Activated B cell treated with CpG ODN at 0.5 μM for 24 hours (primary cell): ENCODE measurements at regions of chr19 and their contacts with region 1.

Region 1: DNA sequence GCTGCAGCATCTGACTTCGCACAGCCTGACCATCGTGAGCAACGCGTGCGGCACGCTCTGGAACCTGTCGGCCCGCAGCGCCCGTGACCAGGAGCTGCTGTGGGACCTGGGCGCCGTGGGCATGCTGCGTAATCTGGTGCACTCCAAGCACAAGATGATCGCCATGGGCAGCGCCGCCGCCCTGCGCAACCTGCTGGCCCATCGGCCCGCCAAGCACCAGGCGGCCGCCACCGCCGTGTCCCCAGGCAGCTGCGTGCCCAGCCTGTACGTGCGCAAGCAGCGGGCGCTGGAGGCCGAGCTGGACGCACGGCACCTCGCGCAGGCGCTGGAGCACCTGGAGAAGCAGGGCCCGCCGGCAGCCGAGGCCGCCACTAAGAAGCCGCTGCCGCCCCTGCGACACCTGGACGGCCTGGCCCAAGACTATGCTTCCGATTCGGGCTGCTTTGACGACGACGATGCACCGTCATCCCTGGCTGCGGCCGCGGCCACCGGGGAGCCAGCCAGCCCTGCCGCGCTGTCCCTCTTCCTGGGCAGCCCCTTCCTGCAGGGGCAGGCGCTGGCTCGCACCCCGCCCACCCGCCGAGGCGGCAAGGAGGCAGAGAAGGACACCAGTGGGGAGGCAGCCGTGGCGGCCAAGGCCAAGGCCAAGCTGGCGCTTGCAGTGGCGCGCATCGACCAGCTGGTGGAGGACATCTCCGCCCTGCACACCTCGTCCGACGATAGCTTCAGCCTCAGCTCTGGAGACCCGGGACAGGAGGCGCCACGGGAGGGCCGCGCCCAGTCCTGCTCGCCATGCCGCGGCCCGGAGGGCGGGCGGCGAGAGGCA is 13.6 kb downstream of the C19orf25 start:
- DNase-seq: no peak
- ATAC-seq: no peak
- H3K4me3 Mint-ChIP-seq: no peak overlapping the region
- H3K27ac Mint-ChIP-seq: no peak overlapping the region
- H3K4me1 Mint-ChIP-seq: peaks cover 10% of the 10 kb centered on the region
- H3K27me3 Mint-ChIP-seq: no peaks in the 10 kb centered on the region
- CTCF ChIP-seq: no peak

Region 2: DNA sequence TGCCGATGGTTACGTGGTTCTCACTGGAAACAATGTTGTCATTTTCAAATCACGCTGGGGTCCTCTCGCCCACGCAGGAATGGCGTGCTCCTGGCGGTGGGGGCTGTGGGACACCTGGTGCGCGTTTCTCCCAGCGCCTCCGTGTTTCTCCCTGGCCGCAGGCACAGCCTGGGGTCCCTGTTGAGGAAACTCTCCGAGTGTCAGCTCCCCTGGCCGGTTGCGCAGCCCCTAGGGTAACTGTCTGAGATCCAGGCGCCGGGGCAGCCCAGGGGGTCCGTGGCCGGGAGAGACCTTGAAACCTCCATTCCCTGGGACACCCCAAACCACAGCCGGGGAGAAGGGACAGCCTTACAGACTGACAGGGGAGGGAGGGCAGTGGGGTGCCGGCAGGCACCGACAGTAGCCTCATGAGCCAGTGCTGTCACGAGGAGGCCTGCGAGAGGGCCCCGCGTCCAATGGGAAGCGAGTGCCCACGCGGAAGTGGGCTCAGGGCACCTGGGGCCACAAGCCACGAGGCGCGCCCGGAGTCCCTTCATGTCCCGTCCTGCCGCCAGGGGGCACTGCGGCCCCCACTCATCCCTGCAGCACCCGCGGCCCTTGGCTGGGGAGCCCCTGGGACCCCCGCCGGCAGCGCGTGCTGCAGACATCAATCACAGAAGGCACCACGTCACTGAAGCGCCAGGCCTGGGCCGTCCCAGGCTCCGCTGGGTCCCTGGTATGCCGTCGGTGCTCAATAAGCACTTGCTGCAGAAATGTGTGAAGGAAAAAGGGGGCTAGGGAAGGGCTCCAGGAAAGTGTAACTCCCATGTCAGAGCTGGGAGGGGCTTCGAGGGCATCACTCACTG is 37.9 kb after region 1 on chr19:
- CTCF ChIA-PET with region 1: no interaction called
- POLR2A ChIA-PET with region 1: no interaction called
- intact Hi-C with region 1: no loop called
- DNase-seq: peak; percentile 52
- ATAC-seq: no peak
- H3K4me3 Mint-ChIP-seq: no peak overlapping the region
- H3K27ac Mint-ChIP-seq: no peak overlapping the region
- H3K4me1 Mint-ChIP-seq: peaks cover 9% of the 10 kb centered on the region
- H3K27me3 Mint-ChIP-seq: peaks cover 30% of the 10 kb centered on the region
- CTCF ChIP-seq: no peak

Region 3: GRCh38 chr19:1767464-1767933 is 302.1 kb after region 1 on chr19:
- CTCF ChIA-PET with region 1: no interaction called
- POLR2A ChIA-PET with region 1: no interaction called
- intact Hi-C with region 1: loop called (anchors 10 kb)
- DNase-seq: peak; percentile 74
- ATAC-seq: peak; percentile 84
- H3K4me3 Mint-ChIP-seq: no peak overlapping the region
- H3K27ac Mint-ChIP-seq: no peak overlapping the region
- H3K4me1 Mint-ChIP-seq: peaks cover 4% of the 10 kb centered on the region
- H3K27me3 Mint-ChIP-seq: peaks cover 57% of the 10 kb centered on the region
- CTCF ChIP-seq: no peak